ENCODE measurements at regions of chr5 and their contacts with region 1.

Region 1: DNA sequence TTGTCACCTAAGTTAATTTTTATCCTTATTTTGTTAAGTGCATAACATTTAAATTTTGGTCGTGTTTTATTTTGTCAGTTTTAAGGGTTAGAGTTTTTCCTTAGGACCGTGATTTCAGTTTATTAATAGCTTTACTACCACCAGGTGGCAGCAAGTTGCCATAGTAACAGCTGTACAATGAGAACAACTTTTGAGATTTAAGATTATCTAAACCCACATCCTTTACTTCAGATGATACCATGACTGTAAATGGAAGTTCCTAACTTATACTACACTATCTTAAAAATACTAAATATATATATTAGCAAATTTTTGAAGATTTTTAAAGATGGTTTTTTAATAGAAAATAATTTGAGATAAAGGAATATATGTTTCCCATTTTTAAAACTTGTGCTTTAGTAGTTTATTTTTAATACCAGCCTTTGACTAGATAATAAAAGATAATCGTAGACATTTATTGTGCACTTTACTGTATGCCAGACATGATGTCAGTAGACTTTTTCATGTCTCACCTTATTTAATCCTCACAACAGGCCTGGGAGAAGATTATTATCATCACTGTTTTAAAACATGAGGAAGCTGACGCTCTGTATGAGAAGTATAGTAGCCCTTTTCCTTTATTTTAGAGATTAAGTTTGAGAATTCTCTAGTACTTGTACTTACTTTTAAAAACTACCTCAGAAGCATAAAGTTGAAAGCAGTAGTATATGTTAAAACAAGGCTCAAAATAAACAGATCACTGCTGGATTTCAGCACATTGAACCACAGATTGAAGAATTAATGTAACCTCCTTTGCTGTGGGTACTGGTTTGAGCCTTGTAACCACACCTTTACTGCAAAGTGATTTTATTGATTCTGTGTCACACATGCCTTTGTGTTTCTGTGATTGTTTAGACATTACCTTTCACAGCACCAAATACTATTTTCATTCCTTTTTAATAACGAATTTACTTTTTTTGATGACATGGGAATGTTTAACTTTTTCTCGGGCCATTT is 27.5 kb downstream of the SREK1 start:
- DNase-seq: peak; percentile 28 to 50 (median 42)
- ATAC-seq: peak; percentile 68
- H3K4me3 ChIP-seq: no peak overlapping the region
- H3K27ac ChIP-seq: no peak overlapping the region
- H3K4me1 ChIP-seq: no peaks in the 10 kb centered on the region
- H3K27me3 ChIP-seq: no peaks in the 10 kb centered on the region
- CTCF ChIP-seq: peak in 2 of 3 experiments; percentile 19 to 57; a peak in 4 of 6 replicates
- EP300 ChIP-seq: no peak
- POLR2A ChIP-seq: no peak
- RAD21 ChIP-seq: peak in 1 of 2 experiments; percentile 45; a peak in 2 of 4 replicates

Region 2: DNA sequence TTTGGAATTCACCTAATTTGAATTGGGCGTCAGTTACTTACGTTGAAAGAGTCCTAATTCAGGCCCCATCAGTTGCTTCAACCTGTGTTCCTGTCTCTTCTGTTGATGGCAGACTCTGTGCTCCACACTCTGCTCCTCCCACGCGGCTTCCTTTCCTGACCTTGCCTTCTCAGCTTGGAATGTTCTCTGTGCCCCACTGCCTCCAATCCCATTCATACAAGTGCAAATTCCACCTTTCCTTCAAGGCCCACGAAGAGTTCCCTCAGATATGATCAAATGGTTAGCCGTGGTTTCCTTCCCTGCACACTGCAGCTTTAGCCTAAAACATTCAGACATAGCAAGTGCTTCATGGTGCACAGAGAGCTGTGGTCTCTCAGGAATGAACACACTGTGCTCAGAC is 38.1 kb after region 1 on chr5:
- CTCF ChIA-PET with region 1: no interaction called
- POLR2A ChIA-PET with region 1: no interaction called
- in situ Hi-C with region 1: no loop called
- intact Hi-C with region 1: loop called (anchors 5 kb)
- DNase-seq: no peak
- ATAC-seq: peak; percentile 29
- H3K4me3 ChIP-seq: no peak overlapping the region
- H3K27ac ChIP-seq: no peak overlapping the region
- H3K4me1 ChIP-seq: peaks cover 6 to 7% of the 10 kb centered on the region in 2 experiments; a peak in 2 of 5 replicates
- H3K27me3 ChIP-seq: no peaks in the 10 kb centered on the region
- CTCF ChIP-seq: no peak
- EP300 ChIP-seq: no peak
- POLR2A ChIP-seq: no peak
- RAD21 ChIP-seq: no peak

Region 3: DNA sequence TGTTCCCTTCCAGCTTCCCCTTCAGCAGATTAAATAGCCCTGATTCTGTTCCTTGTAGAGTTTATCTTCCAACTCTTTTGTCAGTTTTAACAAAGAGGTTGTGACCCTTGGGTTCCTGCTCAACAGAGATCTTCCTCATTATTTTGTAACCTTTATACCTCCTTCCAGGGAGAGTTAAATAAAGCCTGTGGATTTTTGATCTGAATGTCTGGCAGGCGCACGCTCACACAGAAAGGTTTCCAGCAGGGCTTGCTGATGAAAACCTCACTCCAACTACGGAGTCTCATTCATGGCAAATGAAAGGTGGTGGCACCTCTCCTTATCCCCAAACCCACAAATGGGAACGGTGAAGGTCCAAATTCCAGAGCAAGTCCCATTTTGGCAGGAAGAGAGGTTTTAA is 101.5 kb after region 1 on chr5:
- CTCF ChIA-PET with region 1: no interaction called
- POLR2A ChIA-PET with region 1: no interaction called
- in situ Hi-C with region 1: no loop called
- intact Hi-C with region 1: no loop called
- DNase-seq: no peak
- ATAC-seq: no peak
- H3K4me3 ChIP-seq: no peak overlapping the region
- H3K27ac ChIP-seq: no peak overlapping the region
- H3K4me1 ChIP-seq: no peaks in the 10 kb centered on the region
- H3K27me3 ChIP-seq: peaks cover 11 to 13% of the 10 kb centered on the region in 2 experiments; a peak in 4 of 5 replicates
- CTCF ChIP-seq: no peak
- EP300 ChIP-seq: no peak
- POLR2A ChIP-seq: no peak
- RAD21 ChIP-seq: no peak

Measured in K562 (cell line).